ENCODE measurements at regions of chr19 and their contacts with region 1.

Region 1: DNA sequence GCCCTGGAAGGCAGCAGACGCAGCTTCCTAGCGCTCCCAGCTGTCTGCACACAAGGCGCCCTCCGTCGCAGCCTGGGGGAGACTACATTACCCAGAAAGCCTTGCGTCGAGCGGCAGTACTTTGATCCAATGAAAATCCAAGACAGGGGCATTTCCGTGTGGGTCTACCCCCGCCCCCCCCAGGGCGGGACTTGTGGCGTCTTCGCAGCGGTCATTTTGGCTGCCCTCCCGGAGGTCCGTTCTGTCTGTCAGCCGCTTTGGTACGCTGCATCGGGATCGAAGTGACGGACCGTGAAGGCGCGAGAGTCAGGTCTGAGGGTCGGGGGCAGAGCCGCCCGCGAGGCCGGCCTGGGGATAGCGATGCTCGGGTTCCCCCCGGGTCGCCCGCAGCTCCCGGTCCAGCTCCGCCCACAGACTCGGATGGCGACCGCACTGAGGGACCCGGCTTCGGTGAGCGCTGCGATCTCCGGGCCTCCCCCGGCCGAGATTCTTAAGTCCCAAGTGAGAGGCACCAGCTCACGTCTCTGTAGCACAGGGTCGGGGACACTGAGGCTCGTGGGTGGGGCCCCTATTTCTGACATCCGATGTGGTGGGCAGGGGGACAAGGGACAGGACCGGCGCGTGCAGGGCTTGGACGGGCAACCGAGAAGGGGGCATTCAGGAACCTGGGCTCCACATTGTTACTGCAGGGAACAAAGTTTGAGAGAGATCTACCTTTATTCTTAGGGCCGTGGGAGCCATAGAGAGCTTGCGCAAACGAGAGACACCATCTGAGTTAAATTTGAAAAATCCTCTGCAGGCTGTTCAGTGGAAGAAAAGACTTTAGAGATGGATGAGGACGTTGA is at the start of gene ZNF211:
- DNase-seq: peak; percentile 78
- H3K4me3 Mint-ChIP-seq: peak within 1 kb of the TSS; percentile 91
- H3K27ac Mint-ChIP-seq: peak within 1 kb of the TSS; percentile 65
- H3K4me1 Mint-ChIP-seq: peaks cover 16% of the 10 kb centered on the region
- H3K27me3 Mint-ChIP-seq: no peaks in the 10 kb centered on the region
- total RNA-seq, gene ZNF211: 9.6 and 10.6 TPM in 2 replicates

Region 2: GRCh38 chr19:57410877-57411671 is 222.1 kb before region 1 on chr19 and contains the start of gene ZNF17:
- intact Hi-C with region 1: loop called (anchors 2 kb)
- DNase-seq: peak; percentile 88
- H3K4me3 Mint-ChIP-seq: peak within 1 kb of the TSS; percentile 92
- H3K27ac Mint-ChIP-seq: peak within 1 kb of the TSS; percentile 63
- H3K4me1 Mint-ChIP-seq: peaks cover 11% of the 10 kb centered on the region
- H3K27me3 Mint-ChIP-seq: no peaks in the 10 kb centered on the region
- total RNA-seq, gene ZNF17: 7.7 and 9.3 TPM in 2 replicates

Region 3: GRCh38 chr19:57583521-57584416 is 49.4 kb before region 1 on chr19 and contains the start of gene ZIK1:
- intact Hi-C with region 1: loop called (anchors 1 kb)
- DNase-seq: peak; percentile 77
- H3K4me3 Mint-ChIP-seq: peak within 1 kb of the TSS; percentile 92
- H3K27ac Mint-ChIP-seq: peak within 1 kb of the TSS; percentile 79
- H3K4me1 Mint-ChIP-seq: peaks cover 11% of the 10 kb centered on the region
- H3K27me3 Mint-ChIP-seq: no peaks in the 10 kb centered on the region
- total RNA-seq, gene ZIK1: 2.4 and 2.8 TPM in 2 replicates

Region 4: GRCh38 chr19:57599761-57600383 is 33.3 kb before region 1 on chr19 and contains the start of gene ZNF530:
- intact Hi-C with region 1: loop called (anchors 1 kb)
- DNase-seq: peak; percentile 78
- H3K4me3 Mint-ChIP-seq: peak within 1 kb of the TSS; percentile 80
- H3K27ac Mint-ChIP-seq: no peak within 1 kb of the TSS
- H3K4me1 Mint-ChIP-seq: peaks cover 10% of the 10 kb centered on the region
- H3K27me3 Mint-ChIP-seq: no peaks in the 10 kb centered on the region
- total RNA-seq, gene ZNF530: 4.1 and 5.2 TPM in 2 replicates

Region 5: DNA sequence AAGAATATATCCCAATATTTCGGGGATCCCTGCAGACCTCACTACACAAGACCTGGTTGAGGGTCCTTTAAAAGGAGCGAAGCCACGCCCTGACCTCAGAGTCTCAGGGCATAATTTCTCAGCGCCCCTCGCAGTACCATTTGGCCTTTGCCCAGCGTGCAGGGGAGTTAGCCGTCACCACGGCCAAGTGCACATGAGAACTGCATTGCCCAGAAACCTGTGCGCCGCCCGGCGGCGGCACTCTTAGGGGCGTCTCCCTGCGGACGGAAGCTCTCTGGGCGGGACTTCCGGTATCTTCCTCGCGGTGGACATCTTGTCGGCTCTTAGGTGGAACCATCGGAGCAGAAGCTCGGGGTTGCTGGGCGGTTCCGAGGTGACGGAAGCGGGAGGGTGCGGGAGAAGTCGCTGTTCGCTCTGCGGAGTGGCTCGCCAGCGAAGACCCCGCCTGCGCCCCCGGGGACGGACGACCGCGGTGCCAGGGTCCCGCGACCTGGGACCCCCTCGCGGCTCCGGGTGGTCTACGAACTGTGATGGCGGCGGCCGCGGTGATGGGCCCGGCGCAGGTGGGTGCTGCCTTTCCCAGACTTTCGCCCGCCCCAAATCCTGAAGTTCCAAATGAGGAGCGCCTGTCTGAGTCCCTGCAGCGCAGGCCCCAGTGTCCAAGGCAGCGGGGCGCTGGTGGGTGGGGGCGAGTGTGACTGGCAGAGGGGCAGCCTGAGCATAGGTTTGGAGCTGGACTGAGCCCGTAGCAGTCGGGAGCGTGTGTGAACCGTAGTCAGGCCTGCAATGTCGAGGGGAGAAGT is 19.1 kb before region 1 on chr19 and contains the start of gene ZNF134:
- intact Hi-C with region 1: loop called (anchors 1 kb)
- DNase-seq: peak; percentile 84
- H3K4me3 Mint-ChIP-seq: peak within 1 kb of the TSS; percentile 92
- H3K27ac Mint-ChIP-seq: peak within 1 kb of the TSS; percentile 61
- H3K4me1 Mint-ChIP-seq: peaks cover 9% of the 10 kb centered on the region
- H3K27me3 Mint-ChIP-seq: no peaks in the 10 kb centered on the region
- total RNA-seq, gene ZNF134: 7.9 and 8.5 TPM in 2 replicates

Region 6: DNA sequence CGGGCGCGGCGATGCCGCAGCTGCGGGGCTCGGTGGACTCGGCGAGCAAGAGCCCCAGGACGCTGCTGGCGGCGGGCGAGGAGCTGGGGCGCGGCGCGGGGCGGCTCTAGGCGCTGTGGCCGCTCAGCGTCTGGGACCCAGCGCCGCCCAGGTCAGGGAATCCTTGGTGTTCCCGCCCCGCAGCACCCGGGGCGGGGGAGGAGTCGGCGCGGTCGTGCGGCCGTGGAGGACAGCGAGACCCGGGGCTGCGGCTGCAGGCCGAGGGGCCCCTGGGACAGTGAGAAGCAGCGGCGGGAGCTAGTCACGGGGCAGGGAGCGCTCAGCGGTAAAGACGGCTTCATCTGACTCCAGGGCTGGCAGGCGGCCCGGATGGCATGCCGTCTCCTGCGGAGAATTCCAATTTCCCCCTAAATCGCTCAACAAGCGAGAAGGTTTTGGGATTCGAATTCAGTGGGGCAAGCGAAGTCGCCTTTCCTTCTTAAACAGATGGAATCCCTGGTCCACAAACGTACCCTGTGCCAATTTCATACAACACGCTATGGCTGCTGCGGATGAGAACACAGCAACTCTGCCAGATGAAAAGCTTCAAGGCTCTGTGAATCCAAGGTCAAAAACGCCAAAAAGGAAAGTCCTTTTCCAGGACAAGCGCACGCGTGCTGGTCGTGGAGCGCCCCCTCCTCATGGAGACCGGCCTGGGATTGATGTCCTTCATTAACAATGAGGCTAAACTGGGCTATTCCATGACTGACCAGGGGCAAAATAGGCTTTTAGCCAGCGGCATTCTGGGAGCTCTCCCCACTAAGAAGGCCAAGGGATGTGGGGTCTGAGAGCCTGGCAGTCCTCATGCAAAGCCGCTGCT is 31.3 kb after region 1 on chr19:
- intact Hi-C with region 1: no loop called
- DNase-seq: no peak
- H3K4me3 Mint-ChIP-seq: peak overlapping the region; percentile 79
- H3K27ac Mint-ChIP-seq: no peak overlapping the region
- H3K4me1 Mint-ChIP-seq: no peaks in the 10 kb centered on the region
- H3K27me3 Mint-ChIP-seq: peaks cover 9% of the 10 kb centered on the region